Ascending aorta (tissue), 2 donors: ENCODE measurements at regions of chr16 and their contacts with region 1.

Region 1: GRCh38 chr16:30355144-30355894 is at the start of gene CD2BP2:
- DNase-seq: peak; percentile 84 to 99
- H3K4me3 ChIP-seq: peak within 1 kb of the TSS; percentile 72 to 87
- H3K27ac ChIP-seq: peak within 1 kb of the TSS; percentile 95 to 98
- H3K4me1 ChIP-seq: peaks cover 10 to 42% of the 10 kb centered on the region in 2 donors
- H3K27me3 ChIP-seq: no peaks in the 10 kb centered on the region
- CTCF ChIP-seq: peak in 1 of 3 experiments; percentile 5
- total RNA-seq, gene CD2BP2: 15.1 TPM

Region 2: DNA sequence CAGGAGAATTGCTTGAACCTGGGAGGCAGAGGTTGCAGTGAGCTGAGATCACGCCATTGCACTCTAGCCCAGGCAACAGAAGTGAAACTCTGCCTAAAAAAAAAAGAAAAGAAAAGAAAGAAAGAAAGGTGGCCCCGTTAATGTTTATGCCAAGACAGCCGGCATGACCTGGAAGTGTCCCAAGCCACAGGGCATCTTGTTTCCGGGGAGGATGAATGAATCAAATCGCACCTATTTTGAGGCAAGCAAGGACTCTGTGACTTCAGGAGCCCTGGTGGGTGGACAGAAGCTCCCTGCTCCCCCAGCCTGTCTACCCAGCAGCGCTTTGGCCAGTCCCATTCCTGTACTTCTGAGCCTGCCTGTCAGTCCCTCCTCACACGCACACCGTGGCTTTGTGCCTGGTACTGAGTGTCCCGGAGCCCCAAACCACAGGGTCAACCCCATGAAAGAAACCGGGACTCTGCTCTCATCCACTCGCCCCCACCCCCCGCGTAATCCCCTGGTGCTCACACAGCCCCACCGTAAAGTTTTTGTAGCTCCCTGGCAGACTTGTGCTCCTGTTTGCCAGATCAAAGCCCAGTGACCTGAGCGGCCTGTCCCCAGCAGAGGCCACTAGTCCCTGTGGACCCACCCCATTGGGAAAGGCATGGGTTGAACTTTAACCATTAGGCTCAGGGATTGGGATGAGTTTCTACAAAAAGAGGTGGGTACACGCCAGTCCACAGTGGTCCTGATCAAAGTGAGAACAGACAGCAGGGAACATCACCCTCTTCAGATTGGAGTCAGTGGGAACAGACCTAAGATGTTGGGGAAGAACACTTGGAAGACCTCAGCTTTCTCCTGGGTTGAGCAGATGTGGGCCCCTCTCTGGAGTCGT is 19.5 kb before region 1 on chr16:
- intact Hi-C with region 1: loop called (anchors 1 kb)
- DNase-seq: no peak
- H3K4me3 ChIP-seq: peak overlapping the region; percentile 86 to 87
- H3K27ac ChIP-seq: peak overlapping the region; percentile 96 to 97
- H3K4me1 ChIP-seq: peaks cover 0 to 5% of the 10 kb centered on the region in 2 donors
- H3K27me3 ChIP-seq: no peaks in the 10 kb centered on the region
- CTCF ChIP-seq: no peak